ENCODE measurements at regions of chr2 and their contacts with region 1.

Region 1: DNA sequence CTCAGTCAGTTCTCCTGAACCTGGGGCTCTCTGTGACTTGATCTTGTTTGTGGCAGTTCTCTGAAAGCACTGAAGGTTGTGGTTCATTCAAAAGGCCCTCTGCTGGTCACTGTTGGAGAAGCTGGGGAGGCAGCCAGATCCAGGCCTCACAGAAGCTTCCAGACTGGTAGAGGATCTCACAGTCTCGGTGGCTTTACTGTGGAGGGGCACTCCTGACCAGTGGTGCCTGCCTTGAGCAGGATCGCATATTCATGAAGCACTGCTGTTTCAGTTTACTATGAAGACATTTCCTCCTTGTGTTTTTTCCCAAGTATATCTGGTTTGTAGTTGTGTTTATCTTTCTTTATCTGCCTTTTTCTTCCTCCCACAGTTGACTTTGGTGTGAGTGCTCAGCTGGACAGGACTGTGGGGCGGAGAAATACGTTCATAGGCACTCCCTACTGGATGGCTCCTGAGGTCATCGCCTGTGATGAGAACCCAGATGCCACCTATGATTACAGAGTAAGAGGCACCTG is 133.9 kb downstream of the MAP4K4 start:
- DNase-seq: peak; percentile 26
- ATAC-seq: peak; percentile 88
- H3K4me3 ChIP-seq: no peak overlapping the region
- H3K27ac ChIP-seq: peak overlapping the region; percentile 28; the same call in 1 of the 2 replicates
- H3K4me1 ChIP-seq: peaks cover 0 to 12% of the 10 kb centered on the region in 2 experiments; a peak in 1 of 4 replicates
- H3K27me3 ChIP-seq: no peaks in the 10 kb centered on the region
- CTCF ChIP-seq: peak; percentile 65 to 76 (median 66); a peak in 5 of 6 replicates
- POLR2A ChIP-seq: no peak
- RAD21 ChIP-seq: peak; percentile 65

Region 2: GRCh38 chr2:100262555-100263320 is 1568.7 kb before region 1 on chr2:
- CTCF ChIA-PET with region 1: no interaction called
- POLR2A ChIA-PET with region 1: no interaction called
- RAD21 ChIA-PET with region 1: no interaction called
- intact Hi-C with region 1: no loop called
- DNase-seq: peak; percentile 54
- ATAC-seq: peak; percentile 89
- H3K4me3 ChIP-seq: no peak overlapping the region
- H3K27ac ChIP-seq: no peak overlapping the region
- H3K4me1 ChIP-seq: 0 out of 4 replicates have a peak, but pooled peaks cover 0 to 6% of the 10 kb centered on the region in 2 experiments
- H3K27me3 ChIP-seq: no peaks in the 10 kb centered on the region
- CTCF ChIP-seq: peak; percentile 88 to 97 (median 94)
- POLR2A ChIP-seq: no peak
- RAD21 ChIP-seq: peak; percentile 98

Region 3: GRCh38 chr2:101518578-101519492 is 312.6 kb before region 1 on chr2:
- CTCF ChIA-PET with region 1: interaction called, 9 read pairs
- POLR2A ChIA-PET with region 1: no interaction called
- RAD21 ChIA-PET with region 1: no interaction called
- intact Hi-C with region 1: loop called (anchors 1 kb)
- DNase-seq: peak; percentile 40
- ATAC-seq: peak; percentile 84
- H3K4me3 ChIP-seq: peak overlapping the region in 1 of 2 experiments; percentile 20; a peak in 1 of 4 replicates
- H3K27ac ChIP-seq: no peak overlapping the region
- H3K4me1 ChIP-seq: peaks cover 8 to 30% of the 10 kb centered on the region in 2 experiments; a peak in 3 of 4 replicates
- H3K27me3 ChIP-seq: no peaks in the 10 kb centered on the region
- CTCF ChIP-seq: peak; percentile 48 to 76 (median 58); a peak in 4 of 6 replicates
- POLR2A ChIP-seq: no peak
- RAD21 ChIP-seq: peak; percentile 87

Region 4: DNA sequence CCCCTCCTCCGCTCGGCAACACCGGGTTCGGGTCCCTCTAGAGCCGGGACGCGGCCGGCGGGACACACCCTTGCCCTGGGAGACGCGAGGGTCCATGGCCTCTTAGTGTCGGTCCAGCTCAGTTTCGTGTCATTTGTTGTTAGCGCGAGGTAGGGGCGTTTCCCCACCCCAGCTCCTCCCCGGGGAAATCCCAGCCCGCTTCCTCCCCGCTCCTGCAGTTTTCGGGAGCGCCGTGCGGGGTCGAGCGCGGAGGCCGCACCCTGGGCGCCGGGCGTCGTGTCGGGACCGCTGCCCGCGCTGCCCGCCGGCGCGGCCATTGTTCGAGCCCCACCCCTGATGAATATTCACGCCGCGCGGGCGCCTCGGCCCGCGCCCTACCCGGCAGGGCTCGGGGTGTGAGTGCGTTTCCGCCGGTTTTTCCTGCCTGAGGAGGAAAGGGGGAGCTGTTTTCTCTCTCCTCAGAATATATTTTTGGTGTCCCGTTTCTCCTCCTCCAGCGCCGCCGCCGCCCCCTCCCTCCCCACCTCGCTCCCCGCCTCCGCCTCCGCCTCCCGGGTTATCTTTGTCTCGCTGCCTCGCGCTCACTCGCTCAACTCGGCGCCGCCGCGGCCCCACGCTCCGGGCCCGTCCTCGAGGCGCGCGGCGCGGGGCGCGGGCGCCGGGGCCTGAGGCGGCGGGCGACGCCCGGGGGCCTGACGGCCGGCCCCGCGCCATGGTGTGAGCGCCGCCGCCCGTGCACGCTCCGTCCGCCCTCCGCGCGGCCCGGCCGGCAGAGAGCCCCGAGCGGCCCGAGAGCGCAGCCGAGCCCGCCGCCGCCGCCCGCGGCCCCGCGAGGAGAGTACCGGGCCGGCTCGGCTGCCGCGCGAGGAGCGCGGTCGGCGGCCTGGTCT is 134.0 kb before region 1 on chr2 and contains the start of gene MAP4K4:
- CTCF ChIA-PET with region 1: no interaction called
- POLR2A ChIA-PET with region 1: no interaction called
- RAD21 ChIA-PET with region 1: no interaction called
- intact Hi-C with region 1: loop called (anchors 2 kb)
- DNase-seq: peak; percentile 44
- ATAC-seq: peak; percentile 83
- H3K4me3 ChIP-seq: peak within 1 kb of the TSS; percentile 69 to 82
- H3K27ac ChIP-seq: peak within 1 kb of the TSS; percentile 89
- H3K4me1 ChIP-seq: peaks cover 8 to 23% of the 10 kb centered on the region in 2 experiments; a peak in 3 of 4 replicates
- H3K27me3 ChIP-seq: no peaks in the 10 kb centered on the region
- CTCF ChIP-seq: peak in 1 of 3 experiments; percentile 6; a peak in 1 of 6 replicates
- POLR2A ChIP-seq: no peak
- RAD21 ChIP-seq: peak; percentile 16
- total RNA-seq, gene MAP4K4: 62.3 TPM

Region 5: GRCh38 chr2:101770726-101771125 is 60.7 kb before region 1 on chr2:
- CTCF ChIA-PET with region 1: interaction called, 24 read pairs
- POLR2A ChIA-PET with region 1: no interaction called
- RAD21 ChIA-PET with region 1: interaction called, 3 read pairs
- intact Hi-C with region 1: loop called (anchors 5 kb)
- DNase-seq: peak; percentile 62
- ATAC-seq: peak; percentile 86
- H3K4me3 ChIP-seq: no peak overlapping the region
- H3K27ac ChIP-seq: no peak overlapping the region
- H3K4me1 ChIP-seq: peaks cover 3 to 26% of the 10 kb centered on the region in 2 experiments; a peak in 3 of 4 replicates
- H3K27me3 ChIP-seq: no peaks in the 10 kb centered on the region
- CTCF ChIP-seq: peak; percentile 55 to 76 (median 66)
- POLR2A ChIP-seq: no peak
- RAD21 ChIP-seq: peak; percentile 51

Region 6: GRCh38 chr2:101846973-101847372 is 15.6 kb after region 1 on chr2:
- CTCF ChIA-PET with region 1: interaction called, 12 read pairs
- POLR2A ChIA-PET with region 1: no interaction called
- RAD21 ChIA-PET with region 1: no interaction called
- intact Hi-C with region 1: no loop called
- DNase-seq: no peak
- ATAC-seq: no peak
- H3K4me3 ChIP-seq: no peak overlapping the region
- H3K27ac ChIP-seq: no peak overlapping the region
- H3K4me1 ChIP-seq: no peaks in the 10 kb centered on the region
- H3K27me3 ChIP-seq: no peaks in the 10 kb centered on the region
- CTCF ChIP-seq: no peak
- POLR2A ChIP-seq: no peak
- RAD21 ChIP-seq: no peak